ENCODE measurements at regions of chr1 and their contacts with region 1.

Region 1: DNA sequence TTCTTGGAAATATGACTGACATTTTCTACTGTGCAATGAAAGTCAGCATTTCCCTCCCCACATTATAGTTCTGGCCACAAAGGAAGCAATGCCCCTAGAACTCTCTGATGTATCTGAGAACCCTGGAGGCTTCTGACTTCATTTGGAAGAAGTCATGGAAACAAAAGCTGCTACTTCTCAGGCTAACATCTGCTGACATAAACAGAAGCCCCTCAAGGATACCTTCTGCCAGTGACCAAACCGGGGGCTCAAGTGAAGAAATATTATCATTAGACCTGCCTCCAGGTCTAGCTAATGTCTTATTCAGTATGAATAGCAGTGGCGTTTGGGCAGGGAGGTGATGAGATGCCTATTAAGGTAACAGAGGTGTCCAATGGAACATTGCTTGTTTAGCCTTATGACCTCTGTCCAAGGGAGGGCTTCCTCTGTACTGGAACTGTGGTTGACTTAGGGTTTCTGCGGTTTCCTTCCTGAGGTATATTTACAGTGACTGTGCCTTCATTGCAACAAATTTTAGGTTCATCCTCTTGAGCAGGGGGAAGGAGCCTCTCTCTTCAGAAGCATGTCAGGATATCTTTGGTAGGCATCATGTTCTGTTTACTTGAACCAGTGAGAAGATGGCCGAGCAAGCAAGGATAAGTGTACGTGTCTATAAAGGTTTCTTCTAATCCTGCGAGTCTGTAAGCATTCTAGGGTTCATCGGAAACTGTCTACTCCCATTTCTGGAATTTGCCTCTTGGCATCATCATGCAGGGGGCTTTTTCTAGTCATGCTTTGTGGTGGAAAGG is 161.7 kb downstream of the PBX1 start:
- DNase-seq: no peak
- H3K4me3 ChIP-seq: no peak overlapping the region
- H3K27ac ChIP-seq: no peak overlapping the region
- H3K4me1 ChIP-seq: peaks cover 0 to 30% of the 10 kb centered on the region in 2 donors
- H3K27me3 ChIP-seq: no peaks in the 10 kb centered on the region
- CTCF ChIP-seq: no peak

Region 2: DNA sequence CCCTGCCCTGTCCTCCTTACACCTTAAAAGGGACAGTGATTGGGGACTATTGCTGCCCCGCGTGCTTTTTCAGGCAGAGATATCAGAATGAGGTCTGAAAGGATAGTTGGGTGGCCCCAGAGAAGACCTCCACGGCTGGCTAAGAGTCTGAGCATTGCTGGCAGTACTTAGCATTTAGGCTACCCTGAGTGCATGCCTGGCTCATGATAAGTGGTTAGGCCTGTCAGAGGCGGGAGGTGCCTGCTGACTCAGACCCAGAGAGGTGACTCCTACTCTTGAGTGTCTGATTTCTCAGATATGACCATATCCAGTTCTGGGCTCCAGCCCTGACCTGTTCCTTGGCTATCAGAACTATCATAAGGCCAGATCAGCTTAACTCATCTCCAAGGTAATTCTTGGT is 52.0 kb after region 1 on chr1:
- intact Hi-C with region 1: loop called (anchors 5 kb)
- DNase-seq: peak; percentile 46 to 91
- H3K4me3 ChIP-seq: no peak overlapping the region
- H3K27ac ChIP-seq: peak overlapping the region; percentile 80 to 82
- H3K4me1 ChIP-seq: peaks cover 0 to 37% of the 10 kb centered on the region in 2 donors
- H3K27me3 ChIP-seq: no peaks in the 10 kb centered on the region
- CTCF ChIP-seq: no peak

Measured in ascending aorta (tissue), 2 donors.